Calu3 (cell line): ENCODE measurements at regions of chr1 and their contacts with region 1.

Region 1: DNA sequence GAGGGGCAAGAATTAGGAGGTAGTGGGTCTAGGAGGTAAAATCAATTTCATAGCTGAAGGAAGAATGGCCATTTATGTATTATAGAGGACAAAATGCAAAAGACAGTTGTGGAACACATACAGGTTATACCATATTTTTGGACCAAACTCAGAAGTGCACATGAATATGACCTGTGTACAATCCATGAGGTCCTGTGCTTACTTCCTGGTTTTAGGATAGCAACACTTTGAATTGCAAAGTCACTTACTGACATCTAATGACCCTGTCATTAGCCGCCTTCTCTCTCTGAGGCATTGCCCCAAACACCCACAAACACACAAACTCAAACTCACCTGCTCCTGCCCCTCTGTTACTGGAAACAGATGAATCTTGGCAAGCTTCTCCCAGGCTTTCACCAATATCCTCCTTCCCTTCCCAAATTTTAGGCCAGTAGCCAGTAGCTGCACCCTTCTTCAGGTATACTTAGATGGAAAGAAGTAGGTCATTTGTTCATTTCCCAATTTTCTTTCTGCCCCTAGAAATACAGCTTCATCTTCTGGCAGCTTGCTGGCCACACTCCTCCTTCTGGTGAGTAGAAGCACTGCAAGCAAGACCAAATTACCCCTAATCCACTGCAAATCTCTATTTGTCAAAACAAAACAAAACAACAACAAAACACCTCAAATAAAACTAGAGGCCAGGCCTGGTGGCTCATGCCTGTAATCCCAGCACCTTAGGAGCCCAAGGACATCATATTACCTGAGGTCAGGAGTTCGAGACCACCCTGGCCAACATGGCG is 13.7 kb upstream of the RPL5 start:
- DNase-seq: peak; percentile 30
- H3K4me3 Mint-ChIP-seq: no peak overlapping the region
- H3K27ac Mint-ChIP-seq: peak overlapping the region; percentile 0
- H3K4me1 Mint-ChIP-seq: peaks cover 36% of the 10 kb centered on the region
- H3K27me3 Mint-ChIP-seq: no peaks in the 10 kb centered on the region
- CTCF ChIP-seq: peak; percentile 49

Region 2: DNA sequence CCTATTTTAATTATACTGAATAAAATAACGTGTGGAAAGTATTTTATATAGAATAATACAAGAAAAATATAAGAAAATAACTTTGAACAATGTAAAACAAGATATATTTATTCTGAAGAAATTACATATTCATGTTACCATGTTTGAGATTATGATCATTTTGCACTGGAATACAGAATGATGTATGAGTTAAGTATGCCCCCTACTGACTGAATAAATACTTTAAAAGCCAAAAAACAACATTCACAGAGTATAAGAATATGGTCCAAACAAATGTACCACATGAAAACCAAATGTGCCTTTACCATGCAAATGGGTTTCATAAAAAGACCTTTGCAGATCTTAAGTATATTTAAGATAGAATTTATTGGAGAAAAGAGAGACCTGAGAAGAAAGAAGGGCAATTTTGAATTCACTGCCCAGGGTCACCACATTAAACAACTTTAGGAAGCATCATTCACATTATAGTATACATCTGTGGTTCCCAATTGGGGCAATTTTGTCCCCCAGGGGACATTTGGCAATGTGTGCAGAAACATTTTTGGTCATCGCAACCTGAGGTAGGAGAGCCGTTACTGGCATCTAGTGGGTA is 194.9 kb before region 1 on chr1:
- CTCF ChIA-PET with region 1: no interaction called
- intact Hi-C with region 1: loop called (anchors 5 kb)
- DNase-seq: no peak
- H3K4me3 Mint-ChIP-seq: no peak overlapping the region
- H3K27ac Mint-ChIP-seq: no peak overlapping the region
- H3K4me1 Mint-ChIP-seq: no peaks in the 10 kb centered on the region
- H3K27me3 Mint-ChIP-seq: no peaks in the 10 kb centered on the region
- CTCF ChIP-seq: no peak

Region 3: DNA sequence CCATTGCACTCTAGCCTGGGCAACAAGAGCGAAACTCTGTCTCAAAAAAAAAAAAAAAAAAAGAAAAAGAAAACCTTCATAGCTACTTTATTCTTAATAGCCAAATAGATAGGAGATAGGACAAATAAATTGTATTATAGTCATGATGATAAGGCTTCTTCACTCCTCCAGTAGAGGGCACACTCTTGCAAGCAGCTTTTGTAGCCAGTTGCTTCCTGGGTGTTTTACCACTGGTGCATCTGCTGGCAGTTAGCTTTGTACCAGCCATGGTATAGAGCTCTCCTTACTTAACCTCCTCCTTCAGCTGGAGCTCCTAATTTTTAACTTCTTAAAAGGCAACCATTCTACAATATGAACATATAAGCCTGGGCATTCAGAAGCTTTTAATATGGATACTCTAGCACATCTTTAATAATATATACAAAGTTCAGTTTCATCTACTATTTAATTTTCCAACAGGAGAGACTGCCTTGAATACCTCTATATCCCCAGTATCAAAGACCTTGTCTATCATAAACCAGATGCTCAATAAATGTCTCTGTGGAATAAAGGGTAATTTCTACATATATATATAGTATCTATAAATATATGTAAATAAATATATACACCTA is 69.0 kb before region 1 on chr1:
- CTCF ChIA-PET with region 1: interaction called, 16 read pairs
- intact Hi-C with region 1: loop called (anchors 1 kb)
- DNase-seq: peak; percentile 50
- H3K4me3 Mint-ChIP-seq: no peak overlapping the region
- H3K27ac Mint-ChIP-seq: no peak overlapping the region
- H3K4me1 Mint-ChIP-seq: peaks cover 25% of the 10 kb centered on the region
- H3K27me3 Mint-ChIP-seq: no peaks in the 10 kb centered on the region
- CTCF ChIP-seq: peak; percentile 62

Region 4: GRCh38 chr1:92804721-92805169 is 13.4 kb before region 1 on chr1:
- CTCF ChIA-PET with region 1: no interaction called
- intact Hi-C with region 1: loop called (anchors 2 kb)
- DNase-seq: peak; percentile 73
- H3K4me3 Mint-ChIP-seq: no peak overlapping the region
- H3K27ac Mint-ChIP-seq: peak overlapping the region; percentile 87
- H3K4me1 Mint-ChIP-seq: peaks cover 45% of the 10 kb centered on the region
- H3K27me3 Mint-ChIP-seq: no peaks in the 10 kb centered on the region
- CTCF ChIP-seq: no peak

Region 5: DNA sequence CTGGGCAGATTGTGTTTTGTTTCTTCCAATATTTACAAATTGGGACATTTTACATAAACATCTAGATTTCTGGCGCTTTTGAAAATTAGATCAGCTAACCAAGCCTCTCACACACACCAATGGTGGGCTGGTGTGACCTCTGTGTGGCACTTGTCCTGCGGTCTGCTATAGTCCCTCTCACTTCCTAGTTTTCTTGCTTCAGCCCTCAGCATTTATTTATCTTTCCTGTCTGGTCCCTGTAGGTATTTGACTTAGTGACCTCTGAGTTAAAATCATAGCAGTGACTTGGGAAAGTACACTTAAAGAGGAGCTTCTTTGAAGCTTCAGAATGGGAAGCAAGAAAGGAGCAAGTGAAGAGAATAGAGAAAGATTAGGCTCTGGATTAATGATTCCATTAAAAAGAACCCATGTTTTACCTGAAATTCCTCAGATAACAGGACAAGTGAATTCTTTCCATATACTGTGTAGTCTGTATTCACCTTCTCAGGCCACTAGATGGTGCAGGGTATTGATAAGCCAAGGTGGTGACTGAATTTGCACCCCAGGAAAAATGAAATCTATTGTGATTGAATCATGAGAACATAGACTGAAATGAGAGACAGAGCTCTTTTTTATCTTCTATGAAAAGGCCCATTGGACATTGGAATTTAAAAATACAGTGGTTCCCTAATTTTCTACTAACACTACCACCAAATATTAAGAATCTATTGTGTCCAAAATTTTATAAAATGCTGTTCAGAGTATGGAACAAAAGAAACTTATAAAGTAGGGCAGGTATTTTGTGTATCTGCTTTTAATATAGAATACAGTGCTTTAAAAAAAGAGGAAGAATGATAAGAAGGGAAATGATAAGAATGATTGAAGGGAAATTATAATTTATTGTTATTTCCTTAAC is 150.2 kb after region 1 on chr1:
- CTCF ChIA-PET with region 1: no interaction called
- intact Hi-C with region 1: no loop called
- DNase-seq: peak; percentile 17
- H3K4me3 Mint-ChIP-seq: no peak overlapping the region
- H3K27ac Mint-ChIP-seq: no peak overlapping the region
- H3K4me1 Mint-ChIP-seq: peaks cover 8% of the 10 kb centered on the region
- H3K27me3 Mint-ChIP-seq: no peaks in the 10 kb centered on the region
- CTCF ChIP-seq: peak; percentile 56